Dendritic cell treated with granulocyte-macrophage colony-stimulating factor and Interleukin-4, amounts not matched to agents 40 ng/mL and 50 ng/mL, for 4 days (primary cell): ENCODE measurements at regions of chr11 and their contacts with region 1.

Region 1: GRCh38 chr11:22930816-22931594 is 70.7 kb upstream of the CCDC179 start:
- H3K4me3 Mint-ChIP-seq: no peak overlapping the region
- H3K27ac Mint-ChIP-seq: no peak overlapping the region
- H3K4me1 Mint-ChIP-seq: no peaks in the 10 kb centered on the region
- H3K27me3 Mint-ChIP-seq: no peaks in the 10 kb centered on the region

Region 2: GRCh38 chr11:22822203-22822602 is 108.8 kb before region 1 on chr11:
- intact Hi-C with region 1: no loop called
- H3K4me3 Mint-ChIP-seq: no peak overlapping the region
- H3K27ac Mint-ChIP-seq: no peak overlapping the region
- H3K4me1 Mint-ChIP-seq: no peaks in the 10 kb centered on the region
- H3K27me3 Mint-ChIP-seq: no peaks in the 10 kb centered on the region

Region 3: DNA sequence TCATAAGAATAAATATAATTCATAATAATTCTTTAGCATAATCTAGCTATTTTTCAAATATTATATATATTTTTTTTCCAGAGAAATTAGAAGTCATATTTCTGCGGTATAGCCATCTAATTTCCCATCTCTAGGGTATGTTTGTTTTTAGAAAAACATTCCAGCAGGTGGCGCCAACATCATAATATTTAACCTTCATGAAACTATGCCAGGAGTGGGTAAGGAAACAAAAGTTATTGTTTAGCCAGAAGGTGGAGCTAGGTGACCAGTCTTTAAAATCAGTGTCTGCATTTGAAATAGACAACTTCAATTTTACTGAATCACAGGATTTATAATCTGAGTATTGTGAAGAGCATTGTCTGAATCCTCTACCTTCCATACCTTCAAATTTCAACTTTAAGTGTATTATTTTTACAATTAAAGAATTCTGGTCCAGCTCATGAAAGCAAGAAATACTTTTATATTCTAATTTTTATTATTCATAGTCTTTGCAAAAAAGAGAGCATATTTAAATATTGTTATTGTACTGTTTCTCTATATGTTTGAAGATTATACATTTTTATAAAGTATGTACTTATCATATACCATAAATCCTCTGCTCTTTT is 55.0 kb before region 1 on chr11:
- intact Hi-C with region 1: loop called (anchors 10 kb)
- H3K4me3 Mint-ChIP-seq: no peak overlapping the region
- H3K27ac Mint-ChIP-seq: no peak overlapping the region
- H3K4me1 Mint-ChIP-seq: no peaks in the 10 kb centered on the region
- H3K27me3 Mint-ChIP-seq: no peaks in the 10 kb centered on the region